ENCODE measurements at regions of chr7 and their contacts with region 1.

Region 1: DNA sequence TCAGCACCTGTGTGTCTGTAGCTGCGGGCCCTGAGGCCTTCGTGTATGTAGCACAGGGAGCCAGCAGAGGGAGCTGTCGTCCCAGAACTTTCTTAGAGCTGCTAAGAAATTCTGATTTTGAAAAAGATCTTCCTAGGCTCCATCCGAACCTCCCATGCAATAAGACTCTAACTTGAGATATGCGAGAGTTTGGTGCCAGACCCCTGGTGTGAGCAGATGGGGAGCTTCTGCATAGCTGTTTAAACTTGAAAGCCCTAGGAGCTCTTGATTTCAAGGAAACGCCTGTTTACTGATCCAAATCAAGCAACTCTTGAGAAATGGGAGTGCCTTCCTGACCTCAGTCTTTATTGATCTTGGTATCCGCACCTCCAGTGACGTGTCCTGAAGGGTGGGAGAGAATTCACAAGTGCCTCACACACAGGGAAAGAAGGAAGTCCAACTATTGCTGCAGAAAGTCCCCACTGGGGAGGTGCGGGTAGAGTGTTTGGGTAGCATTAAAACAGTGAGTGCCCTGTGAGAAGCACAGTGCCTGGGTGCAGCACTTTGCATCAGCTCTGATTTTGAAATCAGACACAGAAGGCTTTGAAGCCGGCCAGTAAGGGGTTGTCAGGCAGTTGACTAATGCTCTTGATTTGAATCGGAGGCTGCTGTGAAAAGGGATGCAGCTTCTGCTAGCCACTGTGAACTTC is 66.4 kb upstream of the STRIP2 start:
- DNase-seq: peak; percentile 94
- H3K4me3 ChIP-seq: peak overlapping the region in 3 of 4 donors; percentile 11 to 13 (median 11)
- H3K27ac ChIP-seq: no peak overlapping the region
- H3K4me1 ChIP-seq: peaks cover 0 to 11% (median 10%) of the 10 kb centered on the region in 4 donors
- H3K27me3 ChIP-seq: no peaks in the 10 kb centered on the region
- CTCF ChIP-seq: peak; percentile 87 to 91 (median 90)
- EP300 ChIP-seq: no peak
- POLR2A ChIP-seq: no peak

Region 2: DNA sequence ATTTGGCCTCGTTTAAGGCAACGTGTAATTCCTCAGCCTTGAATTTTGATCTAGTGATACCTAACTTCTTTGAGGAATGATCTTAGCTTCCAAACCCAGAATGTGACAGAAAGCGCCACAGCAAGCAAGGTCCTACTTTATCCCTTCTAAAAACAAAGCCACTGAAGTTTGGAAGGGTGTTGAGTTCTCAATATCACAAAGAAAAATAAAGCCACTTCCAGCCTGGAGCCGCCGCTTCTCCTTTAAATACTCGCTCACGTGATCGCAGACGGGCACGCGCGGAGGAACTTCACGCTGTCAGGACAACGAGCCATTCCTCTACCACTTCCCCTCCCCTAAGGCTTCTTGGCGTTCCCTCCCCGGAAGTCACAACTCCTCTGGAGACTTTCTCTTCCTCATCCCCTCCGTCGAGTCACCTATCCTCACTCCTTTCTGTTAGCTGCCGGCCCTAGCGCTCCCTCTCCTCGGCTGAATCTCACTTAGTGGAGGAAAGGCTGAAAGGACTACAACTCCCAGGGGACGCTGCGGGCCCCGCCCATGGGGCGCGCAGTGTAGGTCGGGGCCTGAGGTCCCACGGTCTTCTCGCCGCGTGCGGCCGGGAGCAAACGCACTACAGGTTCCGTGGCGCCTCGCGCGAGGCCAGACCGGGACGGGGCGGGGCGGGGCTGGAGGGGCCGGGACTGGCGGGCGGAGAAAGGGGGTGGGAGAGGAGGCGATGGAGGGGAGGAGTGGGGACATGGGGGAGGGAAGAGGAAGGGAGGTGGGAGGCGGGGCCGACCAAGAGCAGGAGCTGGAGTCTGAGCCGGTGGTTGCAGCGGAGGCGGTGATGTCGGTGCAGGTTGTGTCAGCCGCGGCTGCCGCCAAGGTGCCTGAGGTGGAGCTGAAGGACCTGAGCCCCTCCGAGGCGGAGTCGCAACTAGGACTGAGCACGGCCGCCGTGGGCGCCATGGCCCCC is 143.3 kb before region 1 on chr7 and contains the start of gene AHCYL2:
- intact Hi-C with region 1: loop called (anchors 10 kb)
- DNase-seq: peak; percentile 99
- H3K4me3 ChIP-seq: peak within 1 kb of the TSS; percentile 85 to 98 (median 94)
- H3K27ac ChIP-seq: peak within 1 kb of the TSS; percentile 93 to 96 (median 94)
- H3K4me1 ChIP-seq: peaks cover 5 to 44% (median 27%) of the 10 kb centered on the region in 4 donors
- H3K27me3 ChIP-seq: no peaks in the 10 kb centered on the region
- CTCF ChIP-seq: no peak
- EP300 ChIP-seq: no peak
- POLR2A ChIP-seq: no peak
- total RNA-seq, gene AHCYL2: 9.7 to 14.2 (median 11.9) TPM

Region 3: DNA sequence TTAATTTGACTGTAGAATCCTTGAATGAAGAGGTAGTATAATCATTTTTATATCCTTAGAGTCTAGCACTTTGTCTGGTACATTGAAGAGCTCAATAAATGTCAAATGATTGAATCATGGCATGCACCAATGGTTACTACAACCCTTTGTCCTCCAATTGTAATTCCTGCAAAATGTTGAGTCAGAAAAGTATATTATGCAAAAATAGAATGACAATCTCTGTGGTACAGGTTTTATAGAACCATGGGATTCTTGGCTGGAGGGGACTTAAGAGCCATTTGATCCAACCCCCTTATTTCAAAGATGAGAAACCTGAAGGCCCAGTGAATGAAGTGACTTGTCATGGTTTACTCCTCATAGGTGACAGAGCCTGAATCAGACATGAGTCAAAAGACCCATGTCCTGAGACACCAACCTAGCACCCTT is 103.6 kb after region 1 on chr7:
- intact Hi-C with region 1: loop called (anchors 2 kb)
- DNase-seq: no peak
- H3K4me3 ChIP-seq: no peak overlapping the region
- H3K27ac ChIP-seq: no peak overlapping the region
- H3K4me1 ChIP-seq: peaks cover 0 to 16% (median 10%) of the 10 kb centered on the region in 4 donors
- H3K27me3 ChIP-seq: no peaks in the 10 kb centered on the region
- CTCF ChIP-seq: no peak
- EP300 ChIP-seq: no peak
- POLR2A ChIP-seq: no peak

Region 4: DNA sequence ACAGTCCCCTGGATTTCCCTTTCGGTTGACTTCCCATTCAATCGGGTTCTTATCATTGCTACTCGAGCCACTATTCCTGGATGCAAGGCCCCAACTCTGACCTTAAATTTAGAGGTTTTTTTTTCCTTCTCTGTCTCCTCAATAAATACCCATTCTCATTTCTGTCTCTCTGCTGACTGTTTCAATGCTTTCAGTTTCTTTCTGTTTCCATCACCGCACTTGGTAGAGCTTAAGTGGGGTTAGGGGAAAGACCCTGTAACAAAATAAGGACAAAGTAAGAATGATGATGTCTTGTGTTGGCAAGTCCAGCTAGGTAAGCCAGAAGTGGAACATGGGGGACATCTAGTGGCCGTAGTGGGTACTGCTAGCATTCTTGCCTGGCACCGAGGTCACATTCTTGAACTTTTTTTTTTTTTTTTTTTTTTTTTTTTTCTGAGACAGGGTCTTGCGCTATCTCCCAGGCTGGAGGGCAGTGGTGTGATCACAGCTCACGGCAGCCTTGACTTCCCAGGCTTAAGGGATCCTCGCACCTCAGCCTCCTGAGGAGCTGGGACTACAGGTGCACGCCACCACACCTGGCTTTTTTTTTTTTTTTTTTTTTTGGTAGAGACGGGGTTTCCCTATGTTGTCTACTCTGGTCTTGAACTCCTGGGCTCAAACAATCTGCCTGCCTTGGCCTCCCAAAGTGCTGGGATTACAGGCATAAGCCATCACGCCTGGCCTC is 643.0 kb after region 1 on chr7:
- intact Hi-C with region 1: loop called (anchors 10 kb)
- DNase-seq: peak; percentile 97
- H3K4me3 ChIP-seq: no peak overlapping the region
- H3K27ac ChIP-seq: no peak overlapping the region
- H3K4me1 ChIP-seq: peaks cover 0 to 14% (median 8%) of the 10 kb centered on the region in 4 donors
- H3K27me3 ChIP-seq: no peaks in the 10 kb centered on the region
- CTCF ChIP-seq: peak; percentile 77 to 94 (median 84)
- EP300 ChIP-seq: no peak
- POLR2A ChIP-seq: no peak